Right cardiac atrium (tissue), 5 donors: ENCODE measurements at regions of chr4 and their contacts with region 1.

Region 1: GRCh38 chr4:147866532-147867271 is 134.8 kb downstream of the ARHGAP10 start:
- DNase-seq: peak; percentile 92 to 97 (median 93)
- ATAC-seq: peak; percentile 87 to 91
- H3K4me3 ChIP-seq: no peak overlapping the region
- H3K27ac ChIP-seq: no peak overlapping the region
- H3K4me1 ChIP-seq: peaks cover 3% of the 10 kb centered on the region
- H3K27me3 ChIP-seq: no peaks in the 10 kb centered on the region

Region 2: DNA sequence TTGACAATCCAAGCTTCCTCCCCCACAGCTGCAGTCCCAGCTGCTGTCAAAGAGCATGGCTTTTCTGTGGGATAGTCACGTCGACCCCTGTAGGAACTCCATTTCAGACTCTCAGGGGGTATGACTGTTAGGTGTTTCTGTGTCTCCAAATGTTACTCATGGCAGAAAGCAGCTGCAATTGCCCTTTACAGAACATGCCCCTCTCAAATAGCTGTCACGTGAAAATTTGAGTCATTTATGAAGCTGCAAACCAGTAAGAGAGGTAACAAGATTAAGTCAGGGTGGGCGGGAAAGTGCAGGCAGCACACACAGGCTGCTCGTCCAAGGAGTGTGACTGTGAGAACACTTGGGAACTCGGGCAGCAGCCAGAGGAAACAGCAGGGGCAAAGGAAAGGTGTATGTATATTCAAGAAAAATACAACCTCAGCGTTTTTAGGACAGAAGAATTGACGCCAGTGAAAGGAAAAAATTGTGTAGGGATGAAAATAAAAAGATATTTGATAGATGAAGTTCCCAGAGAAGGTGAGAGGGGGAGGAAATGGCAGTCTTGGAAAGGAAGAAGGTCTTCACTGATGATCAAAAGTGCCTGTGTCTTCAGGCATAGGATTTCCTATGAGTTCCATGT is 316.0 kb before region 1 on chr4:
- intact Hi-C with region 1: no loop called
- DNase-seq: no peak
- ATAC-seq: peak; percentile 44
- H3K4me3 ChIP-seq: peak overlapping the region; percentile 2
- H3K27ac ChIP-seq: no peak overlapping the region
- H3K4me1 ChIP-seq: no peaks in the 10 kb centered on the region
- H3K27me3 ChIP-seq: no peaks in the 10 kb centered on the region

Region 3: GRCh38 chr4:147707865-147708672 is 158.6 kb before region 1 on chr4:
- intact Hi-C with region 1: loop called (anchors 1 to 2 kb)
- DNase-seq: peak in 1 of 3 donors; percentile 28
- ATAC-seq: peak; percentile 61 to 63
- H3K4me3 ChIP-seq: peak overlapping the region; percentile 8
- H3K27ac ChIP-seq: no peak overlapping the region
- H3K4me1 ChIP-seq: no peaks in the 10 kb centered on the region
- H3K27me3 ChIP-seq: no peaks in the 10 kb centered on the region

Region 4: DNA sequence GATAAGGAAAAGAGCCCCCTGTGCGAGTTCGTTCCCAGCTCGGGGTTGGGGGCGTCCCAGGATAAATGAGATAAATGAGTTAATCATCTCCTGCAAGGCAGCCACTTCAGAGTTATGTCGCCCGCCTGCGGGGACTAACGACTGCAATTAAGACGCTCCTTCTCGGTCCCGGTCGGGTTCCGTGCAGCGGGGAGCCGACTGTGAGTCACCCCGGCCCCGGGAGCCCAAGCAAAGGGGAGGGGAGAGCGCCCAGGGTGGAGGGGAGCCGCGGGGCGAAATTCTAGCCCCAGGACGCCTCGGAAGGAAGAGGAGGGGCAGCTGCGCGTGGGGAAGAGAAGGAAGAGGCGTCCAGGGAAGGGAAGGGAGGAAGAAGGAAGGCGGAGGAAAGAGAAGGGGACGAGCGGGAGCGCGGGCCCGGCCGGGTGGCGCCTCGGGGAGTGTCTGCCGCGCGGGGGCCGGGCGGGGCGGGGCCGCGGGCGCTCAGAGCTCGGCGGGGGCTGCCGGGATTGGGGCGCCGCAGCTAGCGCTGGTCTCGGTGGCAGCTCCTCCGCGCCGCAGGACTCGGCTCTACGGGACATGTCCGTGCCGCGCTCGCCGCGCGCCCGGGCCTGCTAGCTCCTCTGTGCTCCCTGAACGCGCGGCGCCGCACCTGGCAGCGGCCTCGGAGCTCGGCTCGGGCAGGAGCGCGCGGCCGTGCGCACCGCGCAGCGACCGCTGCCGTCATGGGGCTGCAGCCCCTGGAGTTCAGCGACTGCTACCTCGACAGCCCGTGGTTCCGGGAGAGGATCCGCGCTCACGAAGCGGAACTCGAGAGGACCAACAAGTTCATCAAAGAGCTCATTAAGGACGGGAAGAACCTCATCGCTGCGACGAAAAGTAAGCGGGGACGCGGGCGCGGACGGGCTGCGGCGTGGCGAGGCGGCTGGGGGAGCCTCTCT is 134.9 kb before region 1 on chr4 and contains the start of gene ARHGAP10:
- intact Hi-C with region 1: loop called in 1 of 4 experiments (anchors 10 kb)
- DNase-seq: peak; percentile 79 to 93 (median 92)
- ATAC-seq: peak; percentile 88 to 90
- H3K4me3 ChIP-seq: peak within 1 kb of the TSS; percentile 60
- H3K27ac ChIP-seq: peak within 1 kb of the TSS; percentile 64
- H3K4me1 ChIP-seq: peaks cover 5% of the 10 kb centered on the region
- H3K27me3 ChIP-seq: no peaks in the 10 kb centered on the region
- total RNA-seq, gene ARHGAP10: 43.3 to 54.1 (median 48.7) TPM